GM10248 (cell line): ENCODE measurements at regions of chr1 and their contacts with region 1.

Region 1: GRCh38 chr1:153977250-153978240 is at the start of gene JTB:
- DNase-seq: peak; percentile 91
- CTCF ChIP-seq: no peak

Region 2: DNA sequence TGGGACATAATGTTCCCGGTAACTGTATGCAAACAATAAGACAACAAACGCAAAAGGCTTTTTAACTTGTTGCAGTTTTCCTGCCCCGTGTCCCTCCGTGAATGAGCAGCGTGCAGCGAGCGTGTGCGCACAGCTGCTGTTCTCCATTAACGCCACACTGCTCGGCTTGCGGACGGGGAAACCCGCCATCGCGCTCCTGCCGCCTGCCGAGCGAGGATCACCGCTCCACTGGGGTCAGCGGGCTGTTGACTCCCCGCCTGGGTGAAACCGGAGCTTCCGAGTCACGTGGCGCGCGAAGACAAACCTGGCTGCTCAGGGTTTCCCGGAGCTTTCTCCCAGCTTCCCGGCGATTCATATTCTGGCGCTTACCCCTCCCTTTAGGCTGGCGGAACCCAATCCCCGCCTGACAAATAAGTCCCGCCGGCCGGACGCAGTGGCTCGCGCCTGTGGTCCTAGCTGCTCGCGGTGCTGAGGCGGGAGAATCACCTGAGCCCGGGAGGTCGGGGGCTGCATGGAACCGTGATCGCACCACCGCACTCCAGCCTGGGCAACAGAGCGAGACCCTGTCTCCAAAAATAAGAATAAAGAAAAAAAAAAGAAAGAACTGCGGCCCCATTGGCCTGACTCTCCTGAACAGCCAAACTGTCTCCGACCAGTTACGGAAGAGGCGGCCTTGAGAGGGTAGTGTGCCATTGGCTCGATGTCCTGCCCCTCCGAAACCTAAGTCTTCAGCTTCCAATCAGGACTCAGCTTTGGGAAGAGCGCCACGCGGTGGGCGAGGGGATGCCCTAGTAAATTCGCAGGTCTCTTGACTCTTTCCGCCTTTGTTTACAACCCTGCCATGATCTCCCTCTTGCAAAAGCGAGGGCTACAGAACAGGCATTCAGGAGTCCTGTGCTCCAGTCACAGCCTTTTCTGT is 10.2 kb before region 1 on chr1 and contains the start of gene CREB3L4:
- CTCF ChIA-PET with region 1: interaction called, 30 read pairs
- POLR2A ChIA-PET with region 1: interaction called, 31 read pairs
- DNase-seq: peak; percentile 91
- CTCF ChIP-seq: peak; percentile 59